Activated naive CD4-positive, alpha-beta T cell treated with anti-CD3 and anti-CD28 coated beads for 36 hours (primary cell): ENCODE measurements at regions of chr5 and their contacts with region 1.

Region 1: GRCh38 chr5:169583424-169584204 is at the start of gene SPDL1:
- DNase-seq: peak; percentile 97
- H3K4me3 Mint-ChIP-seq: peak within 1 kb of the TSS; percentile 96
- H3K27ac Mint-ChIP-seq: peak within 1 kb of the TSS; percentile 94
- H3K4me1 Mint-ChIP-seq: peaks cover 28% of the 10 kb centered on the region
- H3K27me3 Mint-ChIP-seq: no peaks in the 10 kb centered on the region
- total RNA-seq, gene SPDL1: 26.5 to 29.9 TPM

Region 2: DNA sequence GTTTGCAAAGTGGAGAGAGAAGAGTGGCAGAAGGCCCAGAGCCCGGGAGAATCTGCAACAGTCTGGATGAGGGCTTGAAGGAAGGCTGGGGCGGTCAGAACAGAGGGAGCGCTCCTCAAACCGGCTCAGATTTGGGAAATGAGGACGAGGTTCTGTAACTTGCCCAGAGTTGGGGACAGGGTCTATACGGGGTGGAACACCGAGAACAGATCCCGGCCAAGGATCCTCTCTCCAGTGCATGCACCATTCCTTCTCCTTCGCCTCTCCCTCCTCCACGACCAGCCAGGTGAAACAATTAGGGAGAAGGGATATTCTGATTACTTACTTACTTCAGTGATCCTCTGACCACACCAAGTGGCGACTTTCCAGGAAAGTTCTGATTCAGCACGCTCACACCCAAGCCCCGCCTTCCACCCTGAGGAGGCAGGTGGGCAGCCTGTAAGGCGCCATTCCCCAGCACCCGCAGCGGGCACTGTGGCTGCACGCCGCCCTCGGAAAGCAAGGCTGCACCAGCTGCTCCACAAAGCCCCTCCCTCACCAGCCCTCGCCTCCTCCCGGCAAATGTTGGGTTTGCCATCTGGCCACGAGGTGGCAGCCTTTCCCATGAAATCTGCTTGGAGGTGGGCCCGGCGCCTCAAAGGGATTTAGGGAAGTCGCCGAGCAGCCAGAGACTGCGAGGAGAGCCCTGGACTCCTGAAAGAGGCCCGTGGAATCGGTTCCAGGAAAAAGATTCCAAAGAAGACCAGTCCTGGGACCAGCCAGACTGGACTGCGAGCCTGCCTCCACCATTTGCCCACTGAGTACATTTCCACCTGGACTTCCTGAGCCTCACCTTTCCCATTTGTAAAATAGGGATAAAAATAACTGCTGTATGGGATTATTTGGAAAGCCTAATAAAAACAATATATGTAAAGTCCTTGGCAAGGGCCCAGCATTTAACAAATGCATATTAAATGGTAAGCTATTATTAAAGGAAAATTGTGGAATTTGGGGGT is 1314.4 kb before region 1 on chr5:
- CTCF ChIA-PET with region 1: no interaction called
- intact Hi-C with region 1: loop called (anchors 2 kb)
- DNase-seq: peak; percentile 84
- H3K4me3 Mint-ChIP-seq: peak overlapping the region; percentile 39
- H3K27ac Mint-ChIP-seq: no peak overlapping the region
- H3K4me1 Mint-ChIP-seq: peaks cover 21% of the 10 kb centered on the region
- H3K27me3 Mint-ChIP-seq: peaks cover 11% of the 10 kb centered on the region

Region 3: DNA sequence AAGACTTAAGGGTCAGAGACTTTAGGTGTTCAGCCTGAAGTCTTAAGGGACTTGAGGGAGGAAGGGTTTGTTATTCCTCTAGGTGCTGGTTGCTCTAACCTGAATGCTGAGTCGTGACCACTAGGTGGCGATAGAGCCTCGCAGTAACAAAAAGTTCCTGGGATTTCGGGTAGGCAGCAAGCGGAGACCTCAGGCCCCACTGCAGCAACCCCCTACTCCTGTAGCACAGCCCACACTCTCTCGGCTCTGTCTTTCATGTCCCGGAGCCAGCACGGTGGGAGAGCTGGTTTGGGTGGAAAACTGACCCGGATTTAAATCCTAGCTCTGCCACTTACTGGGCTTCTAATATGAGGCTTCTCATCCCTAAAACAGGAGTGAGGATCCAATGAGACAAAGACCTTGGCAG is 904.1 kb before region 1 on chr5:
- CTCF ChIA-PET with region 1: interaction called, 3 read pairs
- intact Hi-C with region 1: loop called (anchors 1 kb)
- DNase-seq: peak; percentile 78
- H3K4me3 Mint-ChIP-seq: no peak overlapping the region
- H3K27ac Mint-ChIP-seq: no peak overlapping the region
- H3K4me1 Mint-ChIP-seq: peaks cover 12% of the 10 kb centered on the region
- H3K27me3 Mint-ChIP-seq: no peaks in the 10 kb centered on the region

Region 4: GRCh38 chr5:168987543-168988300 is 595.9 kb before region 1 on chr5:
- CTCF ChIA-PET with region 1: interaction called, 11 read pairs
- intact Hi-C with region 1: loop called (anchors 1 kb)
- DNase-seq: peak; percentile 77
- H3K4me3 Mint-ChIP-seq: no peak overlapping the region
- H3K27ac Mint-ChIP-seq: no peak overlapping the region
- H3K4me1 Mint-ChIP-seq: no peaks in the 10 kb centered on the region
- H3K27me3 Mint-ChIP-seq: peaks cover 6% of the 10 kb centered on the region

Region 5: DNA sequence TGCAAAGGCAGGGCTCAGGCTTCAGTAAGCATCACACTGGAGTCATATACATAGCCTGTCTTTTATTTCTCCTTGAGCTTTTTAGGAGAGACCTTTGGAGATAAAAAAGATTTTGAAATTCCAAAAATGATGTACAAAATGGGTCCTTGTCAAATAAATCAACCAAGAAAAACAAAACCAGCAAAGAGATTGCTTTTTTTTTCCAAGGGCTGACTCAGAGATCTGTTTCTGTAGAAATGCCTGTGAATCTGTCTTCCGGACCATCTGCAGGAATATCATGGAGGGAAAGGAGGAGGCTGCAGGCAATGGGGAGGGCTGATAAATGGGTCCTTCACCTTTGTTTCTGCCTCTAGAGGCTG is 360.0 kb before region 1 on chr5:
- CTCF ChIA-PET with region 1: no interaction called
- intact Hi-C with region 1: no loop called
- DNase-seq: no peak
- H3K4me3 Mint-ChIP-seq: no peak overlapping the region
- H3K27ac Mint-ChIP-seq: no peak overlapping the region
- H3K4me1 Mint-ChIP-seq: no peaks in the 10 kb centered on the region
- H3K27me3 Mint-ChIP-seq: no peaks in the 10 kb centered on the region

Region 6: GRCh38 chr5:169637085-169637548 is 53.5 kb after region 1 on chr5 and contains the start of gene DOCK2:
- CTCF ChIA-PET with region 1: no interaction called
- intact Hi-C with region 1: loop called (anchors 1 kb)
- DNase-seq: peak; percentile 74
- H3K4me3 Mint-ChIP-seq: peak within 1 kb of the TSS; percentile 93
- H3K27ac Mint-ChIP-seq: peak within 1 kb of the TSS; percentile 95
- H3K4me1 Mint-ChIP-seq: peaks cover 47% of the 10 kb centered on the region
- H3K27me3 Mint-ChIP-seq: no peaks in the 10 kb centered on the region
- total RNA-seq, gene DOCK2: 192 to 203 TPM

Region 7: GRCh38 chr5:169670769-169671525 is 87.3 kb after region 1 on chr5:
- CTCF ChIA-PET with region 1: interaction called, 6 read pairs
- intact Hi-C with region 1: loop called (anchors 1 kb)
- DNase-seq: peak; percentile 58
- H3K4me3 Mint-ChIP-seq: no peak overlapping the region
- H3K27ac Mint-ChIP-seq: no peak overlapping the region
- H3K4me1 Mint-ChIP-seq: peaks cover 16% of the 10 kb centered on the region
- H3K27me3 Mint-ChIP-seq: no peaks in the 10 kb centered on the region

Region 8: GRCh38 chr5:169838688-169839087 is 255.1 kb after region 1 on chr5:
- CTCF ChIA-PET with region 1: no interaction called
- intact Hi-C with region 1: no loop called
- DNase-seq: no peak
- H3K4me3 Mint-ChIP-seq: no peak overlapping the region
- H3K27ac Mint-ChIP-seq: no peak overlapping the region
- H3K4me1 Mint-ChIP-seq: no peaks in the 10 kb centered on the region
- H3K27me3 Mint-ChIP-seq: no peaks in the 10 kb centered on the region

Region 9: DNA sequence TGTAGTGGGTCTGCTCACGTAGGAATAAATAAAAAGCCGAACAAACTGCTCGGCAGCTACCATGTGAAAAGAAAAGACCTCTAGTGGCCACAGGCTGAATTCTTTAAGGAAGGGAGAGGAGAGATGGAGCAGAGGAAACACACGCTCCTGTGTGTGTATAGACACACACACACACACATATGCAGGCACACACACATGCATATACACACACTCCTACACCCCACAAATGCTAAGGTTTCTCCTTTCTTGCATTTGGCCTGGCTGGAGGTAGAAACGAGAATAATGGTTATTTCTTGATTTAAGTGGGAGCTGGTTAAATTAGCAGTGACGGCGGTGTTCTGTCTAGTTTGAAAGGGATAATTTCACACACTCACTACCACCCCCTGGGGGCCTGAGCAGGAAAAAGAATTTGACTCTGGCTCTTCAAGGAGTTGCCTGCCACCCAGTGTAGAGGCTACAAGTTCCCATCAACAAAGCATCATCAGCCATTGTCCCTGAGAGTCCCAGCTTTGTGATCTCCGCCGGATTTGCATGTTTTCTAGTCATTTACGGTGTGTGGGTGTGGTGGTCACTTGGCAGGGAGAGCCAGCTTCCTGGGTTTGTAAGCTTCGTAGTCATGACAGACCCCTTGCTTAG is 396.9 kb after region 1 on chr5 and contains the start of gene INSYN2B:
- CTCF ChIA-PET with region 1: no interaction called
- intact Hi-C with region 1: loop called (anchors 1 kb)
- DNase-seq: peak; percentile 59
- H3K4me3 Mint-ChIP-seq: no peak within 1 kb of the TSS
- H3K27ac Mint-ChIP-seq: no peak within 1 kb of the TSS
- H3K4me1 Mint-ChIP-seq: no peaks in the 10 kb centered on the region
- H3K27me3 Mint-ChIP-seq: no peaks in the 10 kb centered on the region
- total RNA-seq, gene INSYN2B: not detected

Region 10: DNA sequence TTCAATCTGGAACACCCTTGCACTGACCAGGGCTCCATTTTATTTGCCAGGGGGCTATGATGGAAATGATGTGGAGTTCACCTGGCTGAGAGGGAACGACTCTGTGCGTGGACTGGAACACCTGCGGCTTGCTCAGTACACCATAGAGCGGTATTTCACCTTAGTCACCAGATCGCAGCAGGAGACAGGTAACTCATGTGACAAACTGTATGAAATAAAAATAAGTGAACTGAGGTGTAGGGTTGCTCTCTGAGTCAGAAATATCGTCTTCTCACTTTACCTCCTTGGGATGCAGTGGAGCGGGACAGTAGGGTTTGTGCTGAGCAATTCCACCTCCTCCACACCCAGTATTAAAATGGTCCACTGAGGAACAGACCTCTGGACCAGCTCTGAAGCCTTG is 1222.1 kb after region 1 on chr5:
- CTCF ChIA-PET with region 1: no interaction called
- intact Hi-C with region 1: no loop called
- DNase-seq: no peak
- H3K4me3 Mint-ChIP-seq: no peak overlapping the region
- H3K27ac Mint-ChIP-seq: no peak overlapping the region
- H3K4me1 Mint-ChIP-seq: no peaks in the 10 kb centered on the region
- H3K27me3 Mint-ChIP-seq: peaks cover 6% of the 10 kb centered on the region